ENCODE measurements at regions of chr12 and their contacts with region 1.

Region 1: GRCh38 chr12:90854136-90854689 is 100.8 kb downstream of the CCER1 start:
- DNase-seq: no peak
- H3K4me3 ChIP-seq: no peak overlapping the region
- H3K27ac ChIP-seq: no peak overlapping the region
- H3K4me1 ChIP-seq: peaks cover 7% of the 10 kb centered on the region
- H3K27me3 ChIP-seq: no peaks in the 10 kb centered on the region
- CTCF ChIP-seq: peak; percentile 79

Region 2: DNA sequence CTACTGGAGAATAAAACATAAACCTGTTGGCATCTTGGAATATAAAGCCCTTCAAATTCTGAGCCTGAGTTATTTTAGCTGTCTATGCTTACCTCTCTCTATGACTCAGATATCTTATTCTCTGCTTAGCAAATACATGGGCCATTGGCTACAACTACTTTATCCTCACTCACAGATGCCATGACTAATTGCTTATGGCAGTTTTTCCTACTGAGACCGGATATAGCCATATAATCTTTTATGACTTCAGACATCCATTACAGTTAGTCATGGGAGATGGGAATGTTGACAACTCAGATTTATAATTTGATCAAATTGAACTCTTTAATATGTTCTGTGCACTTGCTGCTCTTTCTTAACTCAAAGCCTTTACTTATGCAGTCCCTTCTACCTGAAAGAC is 643.2 kb before region 1 on chr12:
- intact Hi-C with region 1: no loop called
- DNase-seq: no peak
- H3K4me3 ChIP-seq: no peak overlapping the region
- H3K27ac ChIP-seq: no peak overlapping the region
- H3K4me1 ChIP-seq: no peaks in the 10 kb centered on the region
- H3K27me3 ChIP-seq: no peaks in the 10 kb centered on the region
- CTCF ChIP-seq: no peak

Region 3: DNA sequence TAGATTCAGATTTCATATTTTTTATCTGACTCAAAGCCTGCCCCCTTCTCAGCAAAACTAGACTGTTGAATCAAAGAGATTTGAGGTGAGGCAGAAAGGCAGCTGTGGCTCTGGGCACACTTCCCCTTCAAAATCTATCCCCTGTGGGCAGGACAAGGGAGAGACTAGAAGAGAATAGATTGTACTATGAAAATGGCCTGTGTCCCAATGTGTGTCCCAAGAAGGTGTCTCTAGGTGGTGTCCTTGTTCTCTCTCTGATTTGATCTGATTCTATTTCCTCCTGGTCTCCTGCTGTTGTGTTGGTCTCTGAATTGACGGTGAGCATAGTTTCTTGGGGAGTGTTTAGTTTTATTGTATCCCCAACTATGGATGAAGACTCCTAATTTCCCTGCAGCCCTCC is 579.8 kb before region 1 on chr12:
- intact Hi-C with region 1: loop called (anchors 10 kb)
- DNase-seq: no peak
- H3K4me3 ChIP-seq: no peak overlapping the region
- H3K27ac ChIP-seq: no peak overlapping the region
- H3K4me1 ChIP-seq: no peaks in the 10 kb centered on the region
- H3K27me3 ChIP-seq: no peaks in the 10 kb centered on the region
- CTCF ChIP-seq: no peak

Region 4: DNA sequence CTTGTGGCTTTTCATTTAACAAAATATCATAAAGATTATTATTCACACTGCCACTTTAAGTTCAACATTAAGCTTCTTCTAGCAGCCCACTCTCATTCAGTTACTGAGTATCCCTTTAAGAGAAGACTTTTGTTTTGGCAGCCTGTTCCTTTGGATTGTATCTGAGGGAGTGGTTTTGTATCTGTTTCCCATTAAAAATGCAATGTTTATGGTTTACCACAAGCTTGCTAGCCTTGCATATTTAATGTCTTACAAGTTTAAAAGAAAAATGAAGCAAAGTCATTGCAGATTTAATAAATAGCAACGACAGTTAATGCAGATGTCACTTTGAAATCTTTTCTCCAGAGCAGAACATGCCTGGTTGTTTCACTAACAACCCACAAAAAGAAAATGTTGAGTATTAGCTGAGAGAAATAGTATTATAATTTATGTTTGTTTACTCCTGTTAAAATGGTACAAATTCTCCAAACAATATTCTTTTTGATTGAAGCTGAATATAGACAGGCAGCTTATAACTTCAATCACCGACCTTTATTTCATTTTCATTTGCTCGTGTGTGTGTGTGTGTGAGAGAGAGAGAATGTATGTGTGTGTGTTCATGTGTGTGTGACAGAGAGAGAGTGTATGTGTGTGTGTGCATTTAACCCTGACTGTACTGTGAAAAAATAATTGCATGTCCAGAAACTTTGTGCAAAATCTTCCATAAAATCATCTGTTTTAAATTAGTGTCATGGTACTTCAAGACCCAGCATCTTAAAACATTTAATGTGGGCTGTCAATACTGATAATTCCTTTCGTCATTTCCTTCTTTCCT is 326.6 kb after region 1 on chr12:
- intact Hi-C with region 1: no loop called
- DNase-seq: no peak
- H3K4me3 ChIP-seq: peak overlapping the region; percentile 56
- H3K27ac ChIP-seq: peak overlapping the region; percentile 85
- H3K4me1 ChIP-seq: no peaks in the 10 kb centered on the region
- H3K27me3 ChIP-seq: no peaks in the 10 kb centered on the region
- CTCF ChIP-seq: no peak

Measured in left ventricle myocardium inferior (tissue), 1 donor.